ENCODE measurements at regions of chr4 and their contacts with region 1.

Region 1: GRCh38 chr4:60544981-60545380 is 655.1 kb upstream of the ADGRL3 start:
- DNase-seq: no peak
- H3K4me3 ChIP-seq: no peak overlapping the region
- H3K27ac ChIP-seq: no peak overlapping the region
- H3K4me1 ChIP-seq: no peaks in the 10 kb centered on the region
- H3K27me3 ChIP-seq: no peaks in the 10 kb centered on the region
- CTCF ChIP-seq: no peak
- EP300 ChIP-seq: no peak
- POLR2A ChIP-seq: no peak

Region 2: DNA sequence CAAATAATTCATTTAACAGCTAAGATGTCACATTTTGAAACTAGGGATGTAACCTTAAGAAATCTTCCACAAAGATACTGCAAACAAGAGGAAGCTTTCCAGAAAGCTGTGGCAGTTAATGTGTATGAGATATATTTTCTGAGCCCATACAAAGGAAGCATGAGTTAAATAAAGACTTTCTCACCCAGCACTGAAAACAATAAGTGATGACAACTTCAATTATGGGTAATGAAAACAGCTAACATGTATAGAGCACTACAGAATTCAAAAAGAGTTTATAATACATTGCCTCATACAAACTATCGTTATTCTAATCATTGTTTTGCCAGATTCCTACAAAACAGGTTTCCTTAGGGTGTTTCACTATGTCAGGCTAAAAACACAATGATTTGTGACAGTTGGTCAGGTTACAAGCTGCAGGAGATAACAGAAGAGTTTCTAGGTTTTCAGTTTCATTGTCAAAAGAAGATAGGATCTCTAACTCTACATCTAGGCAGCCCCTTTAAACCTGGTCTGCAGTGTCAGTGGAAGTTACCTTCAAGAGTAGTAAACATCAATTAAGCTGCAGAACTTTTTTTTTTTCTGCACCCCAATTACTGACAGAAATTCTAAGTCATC is 37.0 kb after region 1 on chr4:
- in situ Hi-C with region 1: no loop called
- intact Hi-C with region 1: loop called (anchors 1 kb)
- DNase-seq: no peak
- H3K4me3 ChIP-seq: no peak overlapping the region
- H3K27ac ChIP-seq: no peak overlapping the region
- H3K4me1 ChIP-seq: no peaks in the 10 kb centered on the region
- H3K27me3 ChIP-seq: no peaks in the 10 kb centered on the region
- CTCF ChIP-seq: no peak
- EP300 ChIP-seq: no peak
- POLR2A ChIP-seq: no peak

Measured in transverse colon (tissue), 4 donors.